Activated CD4-positive, alpha-beta memory T cell treated with anti-CD3 and anti-CD28 coated beads for 36 hours (primary cell): ENCODE measurements at regions of chr6 and their contacts with region 1.

Region 1: DNA sequence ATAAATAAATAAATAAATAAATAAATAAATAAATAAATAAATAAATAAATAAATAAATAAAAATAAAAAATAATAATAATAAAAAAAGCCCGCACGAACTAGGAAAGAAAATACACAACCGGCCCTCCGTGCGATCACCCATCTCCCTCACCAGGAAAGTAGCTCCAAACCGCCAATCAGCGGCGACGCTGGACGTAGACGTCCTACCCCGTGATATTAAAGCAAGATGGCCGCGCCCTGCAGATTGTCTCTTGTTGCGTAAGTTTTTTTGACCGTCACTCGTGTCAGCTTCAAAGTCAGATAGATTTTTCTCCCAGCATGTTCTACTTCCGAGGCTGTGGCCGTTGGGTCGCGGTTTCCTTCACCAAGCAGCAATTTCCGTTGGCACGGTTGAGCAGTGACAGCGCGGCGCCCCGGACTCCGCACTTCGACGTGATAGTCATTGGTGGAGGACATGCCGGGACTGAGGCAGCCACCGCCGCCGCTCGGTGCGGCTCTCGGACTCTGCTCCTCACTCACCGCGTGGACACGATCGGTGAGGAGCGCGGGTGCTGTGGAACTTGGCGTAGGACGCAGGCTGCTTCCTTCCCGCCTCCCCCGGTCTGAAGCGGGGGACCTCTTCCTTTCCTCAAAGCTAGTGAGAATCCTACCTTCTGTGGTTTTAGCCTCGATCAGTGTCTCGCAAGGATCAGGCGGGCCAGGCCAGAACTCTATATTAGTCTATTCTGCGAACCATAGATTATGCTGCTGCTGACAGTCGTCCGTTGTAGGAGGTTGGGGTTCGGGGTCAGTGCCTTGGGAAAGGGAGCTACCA is at the start of gene MTO1:
- DNase-seq: peak; percentile 91
- H3K4me3 Mint-ChIP-seq: peak within 1 kb of the TSS; percentile 97
- H3K27ac Mint-ChIP-seq: peak within 1 kb of the TSS; percentile 97
- H3K4me1 Mint-ChIP-seq: peaks cover 40% of the 10 kb centered on the region
- H3K27me3 Mint-ChIP-seq: no peaks in the 10 kb centered on the region
- total RNA-seq, gene MTO1: 40.7 to 47.7 TPM

Region 2: GRCh38 chr6:73394577-73395354 is 67.0 kb before region 1 on chr6 and contains the start of gene DDX43:
- CTCF ChIA-PET with region 1: no interaction called
- POLR2A ChIA-PET with region 1: no interaction called
- intact Hi-C with region 1: loop called (anchors 5 kb)
- DNase-seq: peak; percentile 44
- H3K4me3 Mint-ChIP-seq: peak within 1 kb of the TSS; percentile 53
- H3K27ac Mint-ChIP-seq: peak within 1 kb of the TSS; percentile 23
- H3K4me1 Mint-ChIP-seq: peaks cover 14% of the 10 kb centered on the region
- H3K27me3 Mint-ChIP-seq: no peaks in the 10 kb centered on the region
- total RNA-seq, gene DDX43: 0.15 to 0.29 TPM

Region 3: DNA sequence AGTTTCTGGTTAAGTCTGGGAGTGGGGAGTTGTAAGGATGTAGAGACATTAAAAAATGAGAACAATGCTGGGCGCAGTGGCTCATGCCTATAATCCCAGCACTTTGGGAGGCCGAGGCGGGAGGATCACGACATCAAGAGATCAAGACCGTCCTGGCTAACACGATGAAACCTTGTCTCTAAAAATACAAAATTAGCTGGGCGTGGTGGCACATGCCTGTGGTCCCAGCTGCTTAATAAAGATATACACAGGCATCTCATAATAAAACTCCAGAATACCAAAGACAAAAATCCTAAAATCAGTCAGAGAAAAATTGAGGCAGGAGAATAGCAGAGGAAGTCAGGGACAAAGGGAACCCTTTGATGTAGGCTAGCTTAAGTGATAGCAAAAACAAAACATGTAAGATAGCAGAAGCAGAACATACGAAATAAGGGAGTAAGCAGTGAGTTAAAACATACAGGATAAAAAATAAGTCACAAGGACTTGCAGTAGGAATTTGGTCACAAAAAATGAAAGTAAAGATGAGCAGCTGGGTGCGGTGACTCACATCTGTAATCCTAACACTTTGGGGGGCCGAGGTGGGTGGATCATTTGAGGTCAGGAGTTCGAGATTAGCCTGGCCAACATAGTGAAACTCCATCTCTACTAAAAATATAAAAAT is 43.5 kb before region 1 on chr6:
- CTCF ChIA-PET with region 1: no interaction called
- POLR2A ChIA-PET with region 1: no interaction called
- intact Hi-C with region 1: no loop called
- DNase-seq: no peak
- H3K4me3 Mint-ChIP-seq: no peak overlapping the region
- H3K27ac Mint-ChIP-seq: no peak overlapping the region
- H3K4me1 Mint-ChIP-seq: peaks cover 14% of the 10 kb centered on the region
- H3K27me3 Mint-ChIP-seq: no peaks in the 10 kb centered on the region

Region 4: GRCh38 chr6:73451223-73452107 is 10.3 kb before region 1 on chr6:
- CTCF ChIA-PET with region 1: interaction called, 30 read pairs
- POLR2A ChIA-PET with region 1: interaction called, 72 read pairs
- intact Hi-C with region 1: loop called (anchors 1 kb)
- DNase-seq: peak; percentile 61
- H3K4me3 Mint-ChIP-seq: peak overlapping the region; percentile 86
- H3K27ac Mint-ChIP-seq: peak overlapping the region; percentile 93
- H3K4me1 Mint-ChIP-seq: peaks cover 18% of the 10 kb centered on the region
- H3K27me3 Mint-ChIP-seq: no peaks in the 10 kb centered on the region

Region 5: GRCh38 chr6:73471686-73472290 is 10.0 kb after region 1 on chr6:
- CTCF ChIA-PET with region 1: interaction called, 10 read pairs
- POLR2A ChIA-PET with region 1: interaction called, 13 read pairs
- intact Hi-C with region 1: no loop called
- DNase-seq: no peak
- H3K4me3 Mint-ChIP-seq: peak overlapping the region; percentile 31
- H3K27ac Mint-ChIP-seq: peak overlapping the region; percentile 56
- H3K4me1 Mint-ChIP-seq: peaks cover 22% of the 10 kb centered on the region
- H3K27me3 Mint-ChIP-seq: no peaks in the 10 kb centered on the region